ENCODE measurements at regions of chr10 and their contacts with region 1.

Region 1: DNA sequence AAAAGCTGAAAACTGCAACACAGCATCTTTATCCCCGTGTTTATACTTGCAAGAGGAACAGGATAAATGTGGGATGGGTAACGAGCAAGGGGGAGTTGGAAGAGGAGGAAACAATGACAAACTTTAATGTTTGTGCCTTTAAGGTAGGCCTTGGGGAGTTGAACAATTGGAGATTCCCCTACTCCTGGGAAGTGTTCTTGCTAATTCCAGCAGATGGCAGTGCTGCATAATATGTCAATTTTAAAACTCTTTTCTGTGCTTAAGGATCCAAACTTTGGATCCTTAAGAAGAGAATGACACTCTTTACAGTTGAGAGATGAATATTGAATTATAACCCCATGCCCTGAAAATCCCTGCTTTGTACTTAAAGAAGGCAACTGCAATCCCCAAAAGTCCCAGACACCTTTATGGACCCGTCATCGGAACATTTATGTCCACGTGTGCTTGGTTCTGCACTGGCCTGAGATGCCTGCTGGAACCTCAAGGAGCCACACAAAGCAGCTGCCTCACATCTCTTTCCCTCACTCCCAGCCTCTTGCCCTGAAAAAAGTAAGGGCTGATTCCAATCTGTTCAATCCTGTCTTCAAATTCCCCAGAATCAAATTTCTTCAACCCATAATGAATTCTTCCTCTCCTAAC is 12.0 kb downstream of the IFIT5 start:
- DNase-seq: no peak
- ATAC-seq: peak; percentile 87
- H3K4me3 ChIP-seq: no peak overlapping the region
- H3K27ac ChIP-seq: no peak overlapping the region
- H3K4me1 ChIP-seq: no peaks in the 10 kb centered on the region
- H3K27me3 ChIP-seq: no peaks in the 10 kb centered on the region
- CTCF ChIP-seq: peak; percentile 66 to 85 (median 79); a peak in 4 of 6 replicates
- EP300 ChIP-seq: no peak
- POLR2A ChIP-seq: no peak
- RAD21 ChIP-seq: peak; percentile 86

Region 2: DNA sequence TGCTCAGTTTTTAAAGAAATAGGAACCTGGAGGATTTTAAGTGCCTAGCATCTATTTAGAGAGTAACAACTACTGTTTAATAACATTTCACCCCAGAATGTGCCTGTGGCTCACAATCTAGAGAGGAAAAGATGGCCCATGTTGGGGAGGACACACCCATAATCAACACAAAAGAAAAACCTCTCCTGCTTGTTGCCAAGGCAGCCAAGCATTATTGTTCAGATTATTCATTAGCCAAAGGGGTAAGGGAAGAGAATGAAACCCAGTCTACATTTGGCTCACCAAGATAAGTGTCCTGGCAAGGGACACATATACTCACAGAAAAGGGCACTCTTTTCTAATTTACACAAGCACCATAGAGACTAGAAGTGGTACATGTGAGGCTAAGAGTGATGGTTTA is 66.2 kb before region 1 on chr10:
- CTCF ChIA-PET with region 1: no interaction called
- POLR2A ChIA-PET with region 1: no interaction called
- RAD21 ChIA-PET with region 1: no interaction called
- SMC1A ChIA-PET with region 1: no interaction called
- in situ Hi-C with region 1: no loop called
- intact Hi-C with region 1: no loop called
- DNase-seq: no peak
- ATAC-seq: 0 out of 3 replicates have a peak, but pooled peaks have one; percentile 15
- H3K4me3 ChIP-seq: no peak overlapping the region
- H3K27ac ChIP-seq: no peak overlapping the region
- H3K4me1 ChIP-seq: peaks cover 6% of the 10 kb centered on the region
- H3K27me3 ChIP-seq: no peaks in the 10 kb centered on the region
- CTCF ChIP-seq: no peak
- EP300 ChIP-seq: no peak
- POLR2A ChIP-seq: no peak
- RAD21 ChIP-seq: no peak

Region 3: GRCh38 chr10:89553064-89553734 is 126.8 kb after region 1 on chr10:
- CTCF ChIA-PET with region 1: interaction called, 3 read pairs
- POLR2A ChIA-PET with region 1: no interaction called
- RAD21 ChIA-PET with region 1: no interaction called
- SMC1A ChIA-PET with region 1: no interaction called
- in situ Hi-C with region 1: loop called (anchors 10 kb)
- intact Hi-C with region 1: no loop called
- DNase-seq: no peak
- ATAC-seq: no peak
- H3K4me3 ChIP-seq: no peak overlapping the region
- H3K27ac ChIP-seq: no peak overlapping the region
- H3K4me1 ChIP-seq: no peaks in the 10 kb centered on the region
- H3K27me3 ChIP-seq: no peaks in the 10 kb centered on the region
- CTCF ChIP-seq: no peak
- EP300 ChIP-seq: no peak
- POLR2A ChIP-seq: no peak
- RAD21 ChIP-seq: no peak